Activated T-helper 1 cell treated with anti-CD3 and anti-CD28 coated beads, Interleukin-12 subunit alpha, Interleukin-12 subunit beta, Interleukin-2, Interleukin-4 antibody, amounts not matched to agents 30 ng/mL and 10 ng/mL and 1 ng/mL, durations not matched to agents 14 hours and 24 hours and 36 hours (primary cell): ENCODE measurements at regions of chr10 and their contacts with region 1.

Region 1: DNA sequence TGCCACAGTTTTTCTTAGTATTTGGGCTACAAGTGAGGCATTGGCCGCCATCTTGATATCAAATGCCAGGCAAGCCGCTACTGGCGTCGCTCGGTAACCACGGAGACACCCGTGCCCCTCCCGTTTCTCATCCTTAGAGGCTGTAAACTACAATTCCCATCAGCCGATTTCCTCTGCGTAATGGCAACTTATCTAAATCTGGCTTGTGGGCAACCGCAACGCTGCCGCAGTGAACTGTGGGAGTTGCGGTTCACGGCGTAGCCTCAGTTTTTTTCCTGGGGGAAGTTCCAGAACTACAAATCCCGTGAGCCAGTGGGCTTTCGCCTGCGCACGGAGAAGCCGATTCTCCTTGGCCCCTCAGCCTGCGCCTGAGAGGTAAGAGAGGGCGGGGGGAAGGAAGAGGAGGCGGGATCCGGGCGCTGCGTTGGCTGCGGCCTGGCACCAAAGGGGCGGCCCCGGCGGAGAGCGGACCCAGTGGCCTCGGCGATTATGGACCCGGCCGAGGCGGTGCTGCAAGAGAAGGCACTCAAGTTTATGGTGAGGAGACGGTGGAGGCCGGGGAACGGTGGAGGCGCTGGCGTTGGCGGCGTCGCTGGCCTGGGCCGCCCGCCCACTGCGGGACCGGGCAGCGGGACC is at the start of gene BTRC:
- DNase-seq: peak; percentile 96
- H3K4me3 Mint-ChIP-seq: peak within 1 kb of the TSS; percentile 96
- H3K27ac Mint-ChIP-seq: peak within 1 kb of the TSS; percentile 98
- H3K4me1 Mint-ChIP-seq: peaks cover 32% of the 10 kb centered on the region
- H3K27me3 Mint-ChIP-seq: peaks cover 17% of the 10 kb centered on the region
- total RNA-seq, gene BTRC: 19.7 and 22.2 TPM in 2 replicates

Region 2: GRCh38 chr10:101042667-101043355 is 311.0 kb before region 1 on chr10:
- intact Hi-C with region 1: loop called (anchors 1 kb)
- DNase-seq: peak; percentile 85
- H3K4me3 Mint-ChIP-seq: peak overlapping the region; percentile 91
- H3K27ac Mint-ChIP-seq: peak overlapping the region; percentile 84
- H3K4me1 Mint-ChIP-seq: peaks cover 27% of the 10 kb centered on the region
- H3K27me3 Mint-ChIP-seq: peaks cover 20% of the 10 kb centered on the region

Region 3: GRCh38 chr10:101380353-101381017 is 26.7 kb after region 1 on chr10:
- intact Hi-C with region 1: loop called (anchors 1 kb)
- DNase-seq: no peak
- H3K4me3 Mint-ChIP-seq: no peak overlapping the region
- H3K27ac Mint-ChIP-seq: peak overlapping the region; percentile 84
- H3K4me1 Mint-ChIP-seq: peaks cover 9% of the 10 kb centered on the region
- H3K27me3 Mint-ChIP-seq: no peaks in the 10 kb centered on the region

Region 4: GRCh38 chr10:101587725-101588653 is 234.2 kb after region 1 on chr10 and contains the starts of genes DPCD and POLL:
- intact Hi-C with region 1: loop called (anchors 1 kb)
- DNase-seq: peak; percentile 85
- H3K4me3 Mint-ChIP-seq: peak within 1 kb of the TSS; percentile 93
- H3K27ac Mint-ChIP-seq: peak within 1 kb of the TSS; percentile 81
- H3K4me1 Mint-ChIP-seq: peaks cover 24% of the 10 kb centered on the region
- H3K27me3 Mint-ChIP-seq: peaks cover 4% of the 10 kb centered on the region
- total RNA-seq, gene DPCD: 3.6 and 4.8 TPM in 2 replicates
- total RNA-seq, gene POLL: 32.4 and 33.5 TPM in 2 replicates

Region 5: DNA sequence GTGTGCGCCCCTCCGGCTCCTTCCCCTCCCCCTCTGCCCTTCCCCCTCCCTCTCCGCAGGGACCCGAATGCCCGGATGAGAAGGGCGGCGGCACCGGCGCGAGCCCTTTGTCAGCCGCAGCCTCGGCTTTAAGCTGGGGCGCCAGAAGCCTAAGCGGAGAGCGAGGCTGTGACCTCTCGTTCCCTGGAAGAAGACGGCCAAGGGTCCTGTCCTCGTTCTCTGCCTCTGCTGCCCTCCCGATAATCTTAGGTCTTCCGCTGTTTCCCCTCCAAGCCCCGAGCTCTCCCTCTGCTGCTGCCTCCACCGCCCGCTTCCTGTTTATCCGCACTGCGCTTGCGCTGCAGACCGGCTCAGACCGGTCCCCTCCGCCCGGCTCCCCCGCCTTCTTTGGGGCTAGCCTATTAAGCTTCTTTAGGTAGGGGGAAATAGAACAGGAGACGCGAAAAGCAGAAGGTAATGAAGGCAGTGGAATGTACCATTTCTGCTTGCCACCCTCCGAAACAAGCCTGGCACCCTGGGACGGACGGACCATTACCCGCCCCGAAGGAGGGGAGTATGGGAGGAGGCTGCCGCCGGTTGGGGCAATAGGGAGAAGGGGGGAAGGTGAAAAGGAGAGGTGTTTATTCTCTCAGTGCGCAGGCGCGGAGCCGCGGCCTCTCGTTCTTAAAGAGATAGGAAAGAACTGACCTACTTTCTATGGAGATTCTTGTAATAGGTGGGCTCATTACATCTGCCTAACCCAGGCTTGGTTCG is 464.5 kb after region 1 on chr10 and contains the start of gene OGA:
- intact Hi-C with region 1: loop called (anchors 10 kb)
- DNase-seq: peak; percentile 97
- H3K4me3 Mint-ChIP-seq: peak within 1 kb of the TSS; percentile 100
- H3K27ac Mint-ChIP-seq: peak within 1 kb of the TSS; percentile 100
- H3K4me1 Mint-ChIP-seq: peaks cover 57% of the 10 kb centered on the region
- H3K27me3 Mint-ChIP-seq: peaks cover 3% of the 10 kb centered on the region
- total RNA-seq, gene OGA: 113 and 117 TPM in 2 replicates